ENCODE measurements at regions of chr15 and their contacts with region 1.

Region 1: GRCh38 chr15:65516997-65517865 is at the start of gene DPP8:
- DNase-seq: peak; percentile 87
- ATAC-seq: peak; percentile 98
- H3K4me3 ChIP-seq: peak within 1 kb of the TSS; percentile 99
- H3K27ac ChIP-seq: peak within 1 kb of the TSS; percentile 71
- H3K4me1 ChIP-seq: peaks cover 13% of the 10 kb centered on the region
- H3K27me3 ChIP-seq: no peaks in the 10 kb centered on the region
- CTCF ChIP-seq: peak; percentile 90
- total RNA-seq, gene DPP8: 20.0 and 20.6 TPM in 2 replicates

Region 2: DNA sequence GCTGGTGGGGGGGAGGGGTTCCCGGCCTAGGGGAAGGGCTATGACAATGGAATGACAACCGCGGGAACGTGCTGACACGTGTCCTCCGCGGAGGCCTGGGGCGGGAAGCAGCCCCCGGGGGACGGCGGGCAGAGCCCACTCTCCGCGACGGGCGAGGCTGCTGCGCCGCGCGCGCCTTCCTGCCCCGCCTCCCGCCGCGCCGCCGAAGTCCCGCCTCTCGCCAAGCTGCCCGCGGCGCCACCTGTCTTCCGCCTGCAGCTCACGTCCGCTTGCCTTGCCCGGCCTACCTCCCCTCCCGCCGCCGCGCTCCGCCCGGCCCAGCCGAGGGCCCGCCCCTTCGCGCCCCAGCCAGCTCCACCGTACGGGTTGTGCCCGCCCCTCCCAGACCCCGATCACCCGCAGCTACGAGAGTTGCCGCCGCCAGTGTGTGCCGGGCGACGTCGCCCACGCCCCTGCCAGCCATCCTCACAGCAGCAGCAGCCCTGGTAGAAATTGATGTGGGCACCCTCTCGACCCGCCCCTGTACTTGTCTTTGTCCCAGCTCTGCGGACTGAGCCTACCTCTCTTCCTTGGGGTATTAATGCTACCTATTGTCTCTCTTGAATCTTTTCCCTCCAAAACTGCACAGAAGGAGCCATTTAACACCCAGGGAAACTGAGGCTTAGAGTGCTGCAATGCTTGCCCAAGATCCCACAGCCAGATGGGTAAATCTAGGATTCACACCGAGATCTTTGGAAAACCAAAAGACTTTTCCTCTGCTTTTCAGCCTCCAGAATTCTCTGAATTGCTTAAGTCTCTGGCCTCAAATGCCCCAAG is 230.3 kb before region 1 on chr15 and contains the start of gene PARP16:
- CTCF ChIA-PET with region 1: no interaction called
- POLR2A ChIA-PET with region 1: interaction called, 40 read pairs
- intact Hi-C with region 1: no loop called
- DNase-seq: peak; percentile 81
- ATAC-seq: peak; percentile 93
- H3K4me3 ChIP-seq: peak within 1 kb of the TSS; percentile 86
- H3K27ac ChIP-seq: no peak within 1 kb of the TSS
- H3K4me1 ChIP-seq: peaks cover 10% of the 10 kb centered on the region; the same call in 1 of the 2 replicates
- H3K27me3 ChIP-seq: no peaks in the 10 kb centered on the region
- CTCF ChIP-seq: no peak
- total RNA-seq, gene PARP16: 6.4 and 11.0 TPM in 2 replicates

Region 3: GRCh38 chr15:65355173-65355987 is 161.9 kb before region 1 on chr15:
- CTCF ChIA-PET with region 1: no interaction called
- POLR2A ChIA-PET with region 1: no interaction called
- intact Hi-C with region 1: no loop called
- DNase-seq: no peak
- ATAC-seq: no peak
- H3K4me3 ChIP-seq: no peak overlapping the region
- H3K27ac ChIP-seq: no peak overlapping the region
- H3K4me1 ChIP-seq: no peaks in the 10 kb centered on the region
- H3K27me3 ChIP-seq: no peaks in the 10 kb centered on the region
- CTCF ChIP-seq: no peak

Region 4: DNA sequence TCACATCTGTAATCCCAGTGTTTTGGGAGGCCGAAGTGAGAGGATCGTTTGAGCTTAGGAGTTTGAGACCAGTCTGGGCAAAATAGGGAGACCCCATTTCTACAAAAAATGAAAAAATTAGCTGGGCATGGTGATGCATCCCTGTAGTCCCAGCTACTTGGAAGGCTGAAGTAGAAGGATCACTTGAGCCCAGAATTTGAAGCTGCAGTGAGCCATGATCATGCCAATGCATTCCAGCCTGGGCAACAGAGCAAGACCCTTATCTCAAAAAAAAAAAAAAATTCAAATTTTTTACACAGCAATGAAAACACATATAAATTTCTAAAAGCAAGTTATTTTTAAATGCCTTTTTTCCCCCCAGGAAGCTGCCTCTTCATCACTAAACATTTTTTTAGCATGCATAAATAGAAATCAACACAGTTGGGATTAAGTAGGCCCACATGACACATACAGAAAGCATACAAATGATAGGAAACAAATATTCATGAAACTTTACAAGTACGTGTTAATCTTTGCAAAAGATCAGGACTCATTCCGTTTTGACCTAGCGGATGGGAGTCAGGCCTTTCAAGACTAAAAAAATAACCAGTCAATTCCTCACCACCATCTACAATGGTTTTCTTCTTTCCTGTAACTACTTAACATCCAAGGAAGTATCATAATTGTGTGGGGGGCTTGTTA is 48.9 kb before region 1 on chr15:
- CTCF ChIA-PET with region 1: no interaction called
- POLR2A ChIA-PET with region 1: interaction called, 10 read pairs
- intact Hi-C with region 1: no loop called
- DNase-seq: peak; percentile 40
- ATAC-seq: no peak
- H3K4me3 ChIP-seq: no peak overlapping the region
- H3K27ac ChIP-seq: no peak overlapping the region
- H3K4me1 ChIP-seq: peaks cover 7% of the 10 kb centered on the region; the same call in 1 of the 2 replicates
- H3K27me3 ChIP-seq: no peaks in the 10 kb centered on the region
- CTCF ChIP-seq: no peak

Region 5: GRCh38 chr15:65580287-65580686 is 63.1 kb after region 1 on chr15:
- CTCF ChIA-PET with region 1: interaction called, 11 read pairs
- POLR2A ChIA-PET with region 1: interaction called, 3 read pairs
- intact Hi-C with region 1: no loop called
- DNase-seq: peak; percentile 68
- ATAC-seq: peak; percentile 93
- H3K4me3 ChIP-seq: no peak overlapping the region
- H3K27ac ChIP-seq: no peak overlapping the region
- H3K4me1 ChIP-seq: peaks cover 26% of the 10 kb centered on the region
- H3K27me3 ChIP-seq: no peaks in the 10 kb centered on the region
- CTCF ChIP-seq: no peak